ENCODE measurements at regions of chr5 and their contacts with region 1.

Region 1: GRCh38 chr5:61408476-61409168 is 76.6 kb downstream of the ZSWIM6 start:
- DNase-seq: peak; percentile 98
- H3K4me3 Mint-ChIP-seq: peak overlapping the region; percentile 62
- H3K27ac Mint-ChIP-seq: no peak overlapping the region
- H3K4me1 Mint-ChIP-seq: peaks cover 34% of the 10 kb centered on the region
- H3K27me3 Mint-ChIP-seq: no peaks in the 10 kb centered on the region

Region 2: GRCh38 chr5:60699530-60700382 is 708.9 kb before region 1 on chr5 and contains the start of gene DEPDC1B:
- CTCF ChIA-PET with region 1: no interaction called
- intact Hi-C with region 1: loop called (anchors 5 kb)
- DNase-seq: peak; percentile 90
- H3K4me3 Mint-ChIP-seq: peak within 1 kb of the TSS; percentile 88
- H3K27ac Mint-ChIP-seq: peak within 1 kb of the TSS; percentile 81
- H3K4me1 Mint-ChIP-seq: peaks cover 12% of the 10 kb centered on the region
- H3K27me3 Mint-ChIP-seq: peaks cover 5% of the 10 kb centered on the region
- total RNA-seq, gene DEPDC1B: 35.0 to 35.8 TPM

Region 3: DNA sequence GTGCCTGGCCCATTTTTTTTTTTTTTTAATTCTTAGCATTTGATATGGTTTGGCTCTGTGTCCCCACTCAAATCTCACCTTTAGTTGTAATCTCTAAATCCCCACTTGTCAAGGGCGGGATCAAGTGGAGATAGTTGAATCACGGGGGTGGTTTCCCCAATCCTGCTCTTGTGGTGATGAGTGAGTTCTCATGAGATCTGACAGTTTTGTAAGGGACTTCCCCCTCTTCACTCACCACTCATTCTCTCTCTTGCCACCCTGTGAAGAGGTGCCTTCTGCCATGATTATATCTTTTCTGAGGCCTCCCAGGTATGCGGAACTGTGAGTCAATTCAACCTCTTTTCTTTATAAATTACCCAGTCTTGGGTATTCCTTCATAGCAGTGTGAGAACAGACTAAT is 436.4 kb before region 1 on chr5:
- CTCF ChIA-PET with region 1: no interaction called
- intact Hi-C with region 1: loop called (anchors 5 kb)
- DNase-seq: peak; percentile 78
- H3K4me3 Mint-ChIP-seq: no peak overlapping the region
- H3K27ac Mint-ChIP-seq: peak overlapping the region; percentile 11
- H3K4me1 Mint-ChIP-seq: peaks cover 26% of the 10 kb centered on the region
- H3K27me3 Mint-ChIP-seq: no peaks in the 10 kb centered on the region

Region 4: GRCh38 chr5:61200582-61201155 is 208.0 kb before region 1 on chr5:
- CTCF ChIA-PET with region 1: no interaction called
- intact Hi-C with region 1: loop called (anchors 1 kb)
- DNase-seq: no peak
- H3K4me3 Mint-ChIP-seq: no peak overlapping the region
- H3K27ac Mint-ChIP-seq: no peak overlapping the region
- H3K4me1 Mint-ChIP-seq: peaks cover 7% of the 10 kb centered on the region
- H3K27me3 Mint-ChIP-seq: peaks cover 37% of the 10 kb centered on the region

Region 5: GRCh38 chr5:61534481-61535267 is 126.1 kb after region 1 on chr5:
- CTCF ChIA-PET with region 1: no interaction called
- intact Hi-C with region 1: loop called (anchors 1 kb)
- DNase-seq: peak; percentile 18
- H3K4me3 Mint-ChIP-seq: no peak overlapping the region
- H3K27ac Mint-ChIP-seq: no peak overlapping the region
- H3K4me1 Mint-ChIP-seq: peaks cover 17% of the 10 kb centered on the region
- H3K27me3 Mint-ChIP-seq: no peaks in the 10 kb centered on the region

Region 6: DNA sequence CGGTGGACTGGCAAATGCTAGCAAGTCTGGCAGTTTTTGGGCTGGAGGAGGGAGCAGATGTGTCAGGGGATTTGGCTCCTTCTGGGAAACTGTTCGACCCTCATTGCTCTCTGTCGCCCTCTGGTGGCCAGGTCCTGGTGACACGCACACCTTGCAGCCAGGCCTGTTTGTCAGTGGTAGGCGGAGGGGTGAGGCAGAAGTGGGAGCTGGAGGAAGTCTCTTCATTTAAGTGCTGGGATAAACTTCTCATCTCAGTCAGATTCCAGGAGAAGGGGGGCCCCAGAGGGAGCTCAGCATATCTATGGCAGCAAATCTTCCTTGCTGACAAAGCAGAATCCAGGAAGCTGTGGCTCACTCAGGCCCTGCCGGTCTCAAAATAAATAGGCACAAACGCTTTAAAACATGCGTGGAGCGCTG is 250.0 kb after region 1 on chr5:
- CTCF ChIA-PET with region 1: no interaction called
- intact Hi-C with region 1: loop called (anchors 1 kb)
- DNase-seq: peak; percentile 90
- H3K4me3 Mint-ChIP-seq: no peak overlapping the region
- H3K27ac Mint-ChIP-seq: no peak overlapping the region
- H3K4me1 Mint-ChIP-seq: no peaks in the 10 kb centered on the region
- H3K27me3 Mint-ChIP-seq: peaks cover 11% of the 10 kb centered on the region